ENCODE measurements at regions of chr1 and their contacts with region 1.

Region 1: DNA sequence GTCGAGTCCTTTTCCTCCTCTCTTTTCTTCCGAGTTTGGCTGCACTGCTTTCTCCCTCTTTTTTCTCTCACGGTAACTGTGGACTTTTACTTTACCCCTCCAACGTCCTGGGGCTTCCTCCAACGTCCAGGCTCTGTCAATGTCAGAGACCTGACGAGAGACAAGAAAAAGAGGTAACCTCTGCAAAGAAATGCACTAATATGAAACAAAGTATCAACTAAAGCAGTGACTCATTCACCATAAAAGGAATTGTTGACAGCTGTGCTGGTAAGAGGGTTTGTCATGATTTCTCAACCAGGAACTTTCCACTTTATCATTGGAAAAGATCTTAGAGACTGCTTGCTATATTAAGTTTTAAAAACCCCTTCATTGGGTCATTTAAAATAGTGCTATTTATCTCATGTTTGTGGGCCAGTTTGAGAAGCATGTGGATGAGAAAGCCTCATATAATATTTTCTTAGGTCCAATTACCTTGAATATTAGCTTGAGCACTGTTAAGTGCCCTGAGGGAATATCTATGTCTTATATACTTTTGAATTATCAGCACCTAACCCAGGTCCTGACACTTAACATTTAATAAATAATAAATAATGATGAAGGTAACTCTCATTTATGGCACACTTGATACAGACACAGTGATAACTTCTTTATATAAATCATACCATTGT is at the start of gene GBP2:
- DNase-seq: peak; percentile 44
- H3K4me3 Mint-ChIP-seq: peak within 1 kb of the TSS; percentile 91
- H3K27ac Mint-ChIP-seq: peak within 1 kb of the TSS; percentile 96
- H3K4me1 Mint-ChIP-seq: peaks cover 44% of the 10 kb centered on the region
- H3K27me3 Mint-ChIP-seq: no peaks in the 10 kb centered on the region
- total RNA-seq, gene GBP2: 338 to 351 TPM

Region 2: GRCh38 chr1:88990426-88990825 is 135.6 kb before region 1 on chr1:
- CTCF ChIA-PET with region 1: no interaction called
- intact Hi-C with region 1: loop called (anchors 1 kb)
- DNase-seq: no peak
- H3K4me3 Mint-ChIP-seq: peak overlapping the region; percentile 10
- H3K27ac Mint-ChIP-seq: peak overlapping the region; percentile 10
- H3K4me1 Mint-ChIP-seq: peaks cover 45% of the 10 kb centered on the region
- H3K27me3 Mint-ChIP-seq: no peaks in the 10 kb centered on the region

Region 3: GRCh38 chr1:89041119-89041641 is 84.9 kb before region 1 on chr1:
- CTCF ChIA-PET with region 1: no interaction called
- intact Hi-C with region 1: loop called (anchors 1 kb)
- DNase-seq: peak; percentile 63
- H3K4me3 Mint-ChIP-seq: peak overlapping the region; percentile 25
- H3K27ac Mint-ChIP-seq: peak overlapping the region; percentile 72
- H3K4me1 Mint-ChIP-seq: peaks cover 33% of the 10 kb centered on the region
- H3K27me3 Mint-ChIP-seq: peaks cover 11% of the 10 kb centered on the region

Region 4: DNA sequence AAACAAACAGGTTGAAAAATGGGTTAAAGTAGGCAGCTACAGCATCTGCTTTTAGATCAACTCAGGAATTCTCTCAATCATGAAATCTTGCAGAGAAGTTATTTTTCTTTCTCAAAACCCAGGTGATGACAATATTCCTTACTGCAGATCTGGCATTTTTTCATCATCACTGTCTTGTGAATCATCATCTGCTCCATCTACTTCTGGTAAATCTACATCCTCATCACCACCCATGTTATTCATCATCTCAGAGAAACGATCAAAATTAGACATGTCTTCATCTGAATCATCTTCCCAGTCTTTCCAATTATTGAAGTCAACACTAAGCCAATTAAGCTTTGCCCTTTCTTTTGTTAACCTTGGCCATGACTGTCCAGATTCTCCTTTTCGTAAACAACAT is 21.9 kb before region 1 on chr1:
- CTCF ChIA-PET with region 1: no interaction called
- intact Hi-C with region 1: loop called (anchors 1 kb)
- DNase-seq: no peak
- H3K4me3 Mint-ChIP-seq: no peak overlapping the region
- H3K27ac Mint-ChIP-seq: peak overlapping the region; percentile 88
- H3K4me1 Mint-ChIP-seq: peaks cover 41% of the 10 kb centered on the region
- H3K27me3 Mint-ChIP-seq: no peaks in the 10 kb centered on the region

Region 5: DNA sequence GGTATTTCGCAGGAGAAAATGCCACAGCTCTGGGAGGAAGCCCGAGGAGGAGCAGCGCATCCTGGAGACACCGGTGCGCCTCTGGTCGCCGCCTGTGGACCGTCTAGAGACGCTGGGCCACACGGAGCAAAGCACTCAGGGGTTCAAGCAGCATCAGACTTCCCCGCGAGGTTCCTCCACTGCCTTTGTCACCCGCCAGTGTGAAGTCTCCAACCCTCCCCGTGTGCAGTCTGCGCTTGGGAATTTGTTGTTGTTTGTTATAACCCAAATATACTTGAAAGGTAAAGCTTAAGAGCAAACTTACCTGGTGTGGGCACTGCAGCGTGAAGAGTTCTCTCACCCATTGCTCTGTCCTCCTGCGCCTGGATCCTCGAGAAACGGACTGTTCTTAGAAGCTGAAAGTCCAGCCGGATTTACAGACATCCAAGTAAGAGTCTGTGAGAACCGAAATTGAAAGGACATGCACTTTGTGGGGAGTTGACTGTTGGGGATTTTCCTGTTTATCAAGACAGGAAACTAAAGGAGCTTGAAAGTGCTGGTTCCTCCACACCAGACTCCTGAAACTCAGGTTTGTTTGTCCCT is 72.5 kb after region 1 on chr1 and contains the start of gene GBP4:
- CTCF ChIA-PET with region 1: interaction called, 3 read pairs
- intact Hi-C with region 1: loop called (anchors 1 kb)
- DNase-seq: peak; percentile 65
- H3K4me3 Mint-ChIP-seq: peak within 1 kb of the TSS; percentile 92
- H3K27ac Mint-ChIP-seq: peak within 1 kb of the TSS; percentile 98
- H3K4me1 Mint-ChIP-seq: peaks cover 84% of the 10 kb centered on the region
- H3K27me3 Mint-ChIP-seq: no peaks in the 10 kb centered on the region
- total RNA-seq, gene GBP4: 22.9 to 23.2 TPM

Region 6: GRCh38 chr1:89310505-89310904 is 184.5 kb after region 1 on chr1:
- CTCF ChIA-PET with region 1: no interaction called
- intact Hi-C with region 1: loop called (anchors 1 kb)
- DNase-seq: no peak
- H3K4me3 Mint-ChIP-seq: no peak overlapping the region
- H3K27ac Mint-ChIP-seq: peak overlapping the region; percentile 86
- H3K4me1 Mint-ChIP-seq: peaks cover 49% of the 10 kb centered on the region
- H3K27me3 Mint-ChIP-seq: no peaks in the 10 kb centered on the region

Region 7: GRCh38 chr1:89615676-89616598 is 489.9 kb after region 1 on chr1:
- CTCF ChIA-PET with region 1: no interaction called
- intact Hi-C with region 1: loop called (anchors 2 kb)
- DNase-seq: no peak
- H3K4me3 Mint-ChIP-seq: no peak overlapping the region
- H3K27ac Mint-ChIP-seq: no peak overlapping the region
- H3K4me1 Mint-ChIP-seq: peaks cover 65% of the 10 kb centered on the region
- H3K27me3 Mint-ChIP-seq: no peaks in the 10 kb centered on the region